OCI-LY7 (cell line): ENCODE measurements at regions of chr17 and their contacts with region 1.

Region 1: DNA sequence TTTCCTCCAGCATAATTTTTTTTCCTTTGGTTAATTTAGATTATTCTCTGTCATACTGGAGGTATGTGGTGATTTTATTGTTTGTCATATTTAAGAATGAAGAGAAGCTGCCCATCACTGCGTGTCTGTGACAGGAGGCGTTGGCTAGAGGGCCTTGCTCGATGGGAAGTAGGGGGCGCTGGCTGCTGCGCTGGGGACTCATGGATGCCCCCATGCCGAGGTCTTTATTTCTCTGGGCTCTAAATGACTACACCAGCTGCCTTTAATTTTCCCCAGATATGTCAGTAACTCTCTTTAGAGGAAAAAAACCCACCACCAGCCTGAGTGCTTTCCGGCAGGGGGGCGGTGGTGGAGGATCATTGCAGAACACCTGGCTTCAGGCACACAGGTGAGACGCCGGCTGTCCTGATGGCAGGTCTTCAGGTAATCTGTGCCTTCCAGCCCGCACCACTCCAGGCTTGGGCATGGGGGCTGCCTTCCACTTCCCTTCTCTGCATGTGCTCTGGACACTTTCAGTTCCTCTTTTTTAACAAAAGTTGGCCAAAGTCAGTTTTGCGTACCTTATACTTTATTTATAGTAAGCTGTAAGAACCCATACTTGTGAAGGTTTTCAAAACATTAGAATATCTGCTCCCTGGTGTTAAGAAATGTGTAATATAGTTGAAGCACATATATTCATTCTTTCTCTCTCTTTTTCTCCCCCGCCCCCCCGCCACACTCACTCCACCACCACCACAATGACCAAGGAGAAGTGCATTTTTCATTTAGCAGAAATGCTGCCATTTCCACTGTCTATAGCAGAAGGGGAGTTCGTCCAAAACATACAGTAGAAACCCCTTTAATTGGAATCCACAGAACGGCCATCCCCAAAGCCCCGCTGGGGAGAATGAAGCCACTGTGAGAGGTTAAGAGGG is 192.7 kb downstream of the RPTOR start:
- DNase-seq: peak; percentile 98
- H3K4me3 ChIP-seq: peak overlapping the region; percentile 57
- H3K27ac ChIP-seq: peak overlapping the region; percentile 97
- H3K4me1 ChIP-seq: peaks cover 70% of the 10 kb centered on the region
- CTCF ChIP-seq: peak; percentile 94

Region 2: GRCh38 chr17:80559825-80560251 is 177.5 kb before region 1 on chr17:
- CTCF ChIA-PET with region 1: no interaction called
- POLR2A ChIA-PET with region 1: no interaction called
- intact Hi-C with region 1: no loop called
- DNase-seq: no peak
- H3K4me3 ChIP-seq: no peak overlapping the region
- H3K27ac ChIP-seq: no peak overlapping the region
- H3K4me1 ChIP-seq: no peaks in the 10 kb centered on the region
- CTCF ChIP-seq: no peak

Region 3: GRCh38 chr17:80575057-80575875 is 162.1 kb before region 1 on chr17:
- CTCF ChIA-PET with region 1: no interaction called
- POLR2A ChIA-PET with region 1: no interaction called
- intact Hi-C with region 1: loop called (anchors 5 kb)
- DNase-seq: peak; percentile 97
- H3K4me3 ChIP-seq: no peak overlapping the region
- H3K27ac ChIP-seq: no peak overlapping the region
- H3K4me1 ChIP-seq: peaks cover 7% of the 10 kb centered on the region
- CTCF ChIP-seq: peak; percentile 100

Region 4: DNA sequence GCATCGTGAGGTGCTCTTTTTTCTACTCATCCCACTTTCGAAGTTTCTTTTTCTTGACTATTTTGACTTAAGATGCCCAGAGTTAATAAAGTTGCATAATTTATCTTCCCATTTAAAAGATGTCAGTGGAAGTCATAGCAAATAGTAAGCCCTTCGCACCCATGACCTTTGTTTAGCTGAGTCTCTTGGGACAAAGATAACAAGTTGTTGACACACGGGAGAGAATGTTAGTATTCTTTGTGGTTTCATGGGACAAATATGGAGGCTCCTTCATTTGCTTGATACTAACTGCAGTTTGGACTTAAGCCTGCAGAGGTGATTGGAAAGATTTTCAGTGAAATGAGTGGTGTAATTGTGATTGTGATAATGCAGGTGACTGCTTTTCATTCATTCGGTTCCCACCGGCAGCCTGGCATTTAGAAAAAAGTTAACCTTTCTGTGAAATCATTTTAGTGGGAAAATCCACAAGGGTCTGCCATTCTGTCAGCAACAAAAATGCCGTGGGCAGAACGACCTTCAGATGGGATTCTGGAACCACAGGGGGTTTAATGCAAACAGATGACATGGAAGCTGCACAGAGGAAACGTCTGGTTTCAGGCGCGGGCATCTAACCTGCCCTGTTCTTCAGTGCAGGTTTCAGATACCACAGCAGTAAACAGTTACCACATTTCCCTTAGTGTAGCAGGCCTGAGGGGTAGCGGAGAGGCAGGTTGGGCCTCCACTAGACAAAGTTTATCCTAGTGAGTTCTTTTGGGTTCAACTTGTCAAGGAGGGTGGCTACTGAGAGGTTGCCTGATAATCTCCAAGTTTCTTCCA is 69.7 kb before region 1 on chr17:
- CTCF ChIA-PET with region 1: no interaction called
- POLR2A ChIA-PET with region 1: no interaction called
- intact Hi-C with region 1: loop called (anchors 5 kb)
- DNase-seq: no peak
- H3K4me3 ChIP-seq: no peak overlapping the region
- H3K27ac ChIP-seq: no peak overlapping the region
- H3K4me1 ChIP-seq: peaks cover 49% of the 10 kb centered on the region
- CTCF ChIP-seq: no peak

Region 5: GRCh38 chr17:80720610-80721577 is 16.5 kb before region 1 on chr17:
- CTCF ChIA-PET with region 1: no interaction called
- POLR2A ChIA-PET with region 1: interaction called, 6 read pairs
- intact Hi-C with region 1: loop called (anchors 2 kb)
- DNase-seq: peak; percentile 91
- H3K4me3 ChIP-seq: peak overlapping the region; percentile 60
- H3K27ac ChIP-seq: peak overlapping the region; percentile 81
- H3K4me1 ChIP-seq: peaks cover 55% of the 10 kb centered on the region
- CTCF ChIP-seq: no peak

Region 6: GRCh38 chr17:80761110-80761871 is 23.9 kb after region 1 on chr17:
- CTCF ChIA-PET with region 1: no interaction called
- POLR2A ChIA-PET with region 1: interaction called, 9 read pairs
- intact Hi-C with region 1: loop called (anchors 2 kb)
- DNase-seq: no peak
- H3K4me3 ChIP-seq: peak overlapping the region; percentile 39
- H3K27ac ChIP-seq: peak overlapping the region; percentile 83
- H3K4me1 ChIP-seq: peaks cover 72% of the 10 kb centered on the region
- CTCF ChIP-seq: no peak

Region 7: DNA sequence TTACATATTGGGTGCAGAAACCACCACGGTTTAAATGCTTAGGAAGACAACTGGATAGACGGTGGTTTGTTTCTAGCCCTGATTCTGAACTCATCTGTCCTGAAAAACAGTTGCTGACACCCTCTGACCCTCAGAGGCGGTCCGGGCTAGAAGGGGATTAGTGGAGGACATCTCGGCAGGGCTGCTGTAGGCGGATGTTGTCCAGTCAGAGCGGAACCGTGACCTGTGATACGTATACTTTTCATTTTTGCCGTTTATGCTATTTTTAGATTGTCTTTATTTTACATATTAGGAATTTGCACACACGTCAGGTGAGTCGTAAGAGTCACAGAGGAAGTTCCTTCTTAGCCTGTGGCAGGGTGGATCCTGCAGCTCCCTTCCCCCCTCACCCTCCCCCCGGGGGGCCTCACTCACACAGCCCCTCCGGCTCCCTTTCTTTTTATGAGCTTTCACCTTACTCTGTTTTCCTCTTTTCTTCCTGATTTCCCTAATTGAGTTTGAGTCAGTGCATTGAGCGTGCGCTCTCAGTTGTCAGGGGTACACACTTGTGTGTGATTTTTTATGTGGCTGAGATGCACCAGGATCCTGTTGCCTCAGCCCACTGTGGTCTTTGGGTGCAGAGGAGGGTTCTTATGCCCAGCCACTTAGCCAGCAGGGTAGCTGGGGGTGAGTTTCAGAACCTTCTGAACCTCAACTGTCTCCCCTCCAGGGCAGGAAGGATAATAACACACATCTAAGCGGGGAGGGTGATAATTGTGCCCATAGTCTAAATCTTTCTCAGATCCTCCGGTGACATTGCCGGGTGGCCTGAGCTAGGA is 43.2 kb after region 1 on chr17:
- CTCF ChIA-PET with region 1: no interaction called
- POLR2A ChIA-PET with region 1: interaction called, 6 read pairs
- intact Hi-C with region 1: loop called (anchors 5 kb)
- DNase-seq: peak; percentile 95
- H3K4me3 ChIP-seq: peak overlapping the region; percentile 58
- H3K27ac ChIP-seq: peak overlapping the region; percentile 93
- H3K4me1 ChIP-seq: peaks cover 68% of the 10 kb centered on the region
- CTCF ChIP-seq: no peak

Region 8: GRCh38 chr17:80791758-80792284 is 54.5 kb after region 1 on chr17:
- CTCF ChIA-PET with region 1: no interaction called
- POLR2A ChIA-PET with region 1: no interaction called
- intact Hi-C with region 1: no loop called
- DNase-seq: no peak
- H3K4me3 ChIP-seq: no peak overlapping the region
- H3K27ac ChIP-seq: peak overlapping the region; percentile 0
- H3K4me1 ChIP-seq: peaks cover 39% of the 10 kb centered on the region
- CTCF ChIP-seq: no peak

Region 9: DNA sequence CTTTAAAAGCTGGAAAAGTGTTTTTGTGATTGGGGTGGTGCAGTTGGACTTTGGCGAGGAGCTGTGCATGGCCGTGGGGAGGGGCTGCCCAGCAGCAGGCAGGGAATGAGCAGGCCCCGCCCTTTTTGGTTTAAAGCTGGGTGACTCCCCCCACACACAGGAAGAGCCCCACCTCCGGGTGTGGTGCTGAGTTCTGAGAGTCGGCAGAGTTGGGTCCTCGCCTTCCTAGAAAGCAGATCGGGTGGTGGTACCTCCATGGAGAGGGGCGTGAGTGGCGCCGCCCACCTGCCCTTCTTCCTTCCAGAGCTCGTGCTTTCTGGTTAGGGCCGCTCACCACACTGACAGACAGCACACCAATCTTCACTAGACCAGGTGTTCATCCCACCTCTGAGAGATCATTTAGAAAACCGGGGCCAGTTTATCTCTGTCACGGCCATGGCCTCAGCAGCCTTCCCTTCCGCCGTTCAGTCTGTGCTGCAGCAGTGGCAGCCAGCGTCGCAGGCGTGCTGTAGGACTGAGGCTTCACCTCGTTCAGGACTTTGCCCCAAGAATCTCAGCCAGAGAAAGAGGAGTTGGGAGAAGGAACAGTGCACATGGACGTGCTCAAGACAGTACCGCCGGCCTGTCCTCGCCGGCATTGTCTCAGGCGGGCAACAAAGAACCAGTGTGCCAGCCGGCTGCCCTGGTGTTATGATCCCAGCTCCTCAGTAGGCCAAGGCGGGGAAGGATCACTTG is 110.3 kb after region 1 on chr17:
- CTCF ChIA-PET with region 1: no interaction called
- POLR2A ChIA-PET with region 1: no interaction called
- intact Hi-C with region 1: loop called (anchors 5 kb)
- DNase-seq: no peak
- H3K4me3 ChIP-seq: no peak overlapping the region
- H3K27ac ChIP-seq: no peak overlapping the region
- H3K4me1 ChIP-seq: peaks cover 36% of the 10 kb centered on the region
- CTCF ChIP-seq: no peak